ENCODE measurements at regions of chr10 and their contacts with region 1.

Region 1: GRCh38 chr10:110081911-110082310 is 74.1 kb downstream of the ADD3 start:
- DNase-seq: no peak
- H3K4me3 Mint-ChIP-seq: peak overlapping the region; percentile 40
- H3K27ac Mint-ChIP-seq: peak overlapping the region; percentile 83
- H3K4me1 Mint-ChIP-seq: peaks cover 84% of the 10 kb centered on the region
- H3K27me3 Mint-ChIP-seq: no peaks in the 10 kb centered on the region

Region 2: DNA sequence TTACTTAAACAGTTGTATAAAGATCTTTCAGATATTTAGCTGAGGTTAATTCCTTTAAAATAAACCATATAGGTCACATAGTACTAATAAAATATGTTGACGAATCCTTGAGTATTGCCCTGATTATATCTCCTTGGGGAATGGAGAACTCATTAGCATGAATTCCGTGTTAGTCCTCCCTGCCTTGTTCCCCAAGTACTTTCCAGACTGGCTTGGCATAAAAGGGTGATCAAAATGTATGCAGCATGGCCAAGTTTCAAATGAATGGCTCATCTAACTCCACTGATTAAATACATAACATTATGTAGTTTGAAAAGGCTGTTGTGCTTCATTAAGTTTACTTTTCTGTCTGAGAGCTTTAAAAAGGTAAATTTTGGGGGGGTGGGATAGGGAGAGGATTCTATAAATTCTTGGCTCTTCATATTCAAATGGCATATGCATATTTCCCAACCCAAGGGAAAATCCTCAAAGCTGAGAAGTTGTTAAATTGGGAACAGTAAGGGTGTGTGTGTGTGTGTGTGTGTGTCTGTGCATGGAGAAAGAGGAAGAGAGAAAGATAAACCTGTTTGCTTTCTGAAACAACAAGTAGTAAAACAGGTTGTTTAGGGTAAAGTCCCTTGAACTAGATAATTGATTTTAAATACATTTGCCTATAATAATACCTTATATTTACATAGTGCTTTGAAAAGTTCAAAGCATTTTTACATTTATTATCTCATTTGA is 78.9 kb before region 1 on chr10:
- CTCF ChIA-PET with region 1: no interaction called
- POLR2A ChIA-PET with region 1: no interaction called
- DNase-seq: no peak
- H3K4me3 Mint-ChIP-seq: no peak overlapping the region
- H3K27ac Mint-ChIP-seq: no peak overlapping the region
- H3K4me1 Mint-ChIP-seq: peaks cover 14% of the 10 kb centered on the region
- H3K27me3 Mint-ChIP-seq: peaks cover 8% of the 10 kb centered on the region

Region 3: DNA sequence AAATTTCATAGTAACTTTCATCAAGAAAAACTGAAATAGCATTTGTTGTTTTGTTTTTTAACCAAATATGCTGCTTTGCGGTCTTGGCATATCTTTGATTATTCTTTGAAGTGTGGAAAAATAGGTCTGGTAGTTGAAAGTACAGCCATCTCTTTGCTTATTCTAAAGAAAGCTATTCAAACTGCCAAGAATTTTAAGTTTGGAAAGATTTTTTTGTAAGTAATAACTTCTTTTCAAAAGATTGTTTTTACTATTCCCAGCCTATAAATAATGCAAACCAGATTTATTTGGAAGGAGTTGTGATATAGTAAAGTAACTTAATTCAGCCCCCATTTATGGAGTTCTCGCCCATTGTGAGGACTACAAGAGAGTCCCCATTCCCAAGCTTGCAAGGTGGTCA is 12.9 kb after region 1 on chr10:
- CTCF ChIA-PET with region 1: interaction called, 10 read pairs
- POLR2A ChIA-PET with region 1: no interaction called
- DNase-seq: no peak
- H3K4me3 Mint-ChIP-seq: no peak overlapping the region
- H3K27ac Mint-ChIP-seq: no peak overlapping the region
- H3K4me1 Mint-ChIP-seq: peaks cover 50% of the 10 kb centered on the region
- H3K27me3 Mint-ChIP-seq: no peaks in the 10 kb centered on the region